ENCODE measurements at regions of chr3 and their contacts with region 1.

Region 1: GRCh38 chr3:102106416-102107097 is 257.2 kb downstream of the NFKBIZ start:
- DNase-seq: no peak
- H3K4me3 ChIP-seq: no peak overlapping the region
- H3K27ac ChIP-seq: no peak overlapping the region
- H3K4me1 ChIP-seq: no peaks in the 10 kb centered on the region
- H3K27me3 ChIP-seq: no peaks in the 10 kb centered on the region
- CTCF ChIP-seq: no peak
- POLR2A ChIP-seq: no peak

Region 2: GRCh38 chr3:100548053-100548452 is 1558.5 kb before region 1 on chr3:
- intact Hi-C with region 1: loop called (anchors 10 kb)
- DNase-seq: no peak
- H3K4me3 ChIP-seq: no peak overlapping the region
- H3K27ac ChIP-seq: no peak overlapping the region
- H3K4me1 ChIP-seq: no peaks in the 10 kb centered on the region
- H3K27me3 ChIP-seq: no peaks in the 10 kb centered on the region
- CTCF ChIP-seq: no peak
- POLR2A ChIP-seq: no peak

Region 3: DNA sequence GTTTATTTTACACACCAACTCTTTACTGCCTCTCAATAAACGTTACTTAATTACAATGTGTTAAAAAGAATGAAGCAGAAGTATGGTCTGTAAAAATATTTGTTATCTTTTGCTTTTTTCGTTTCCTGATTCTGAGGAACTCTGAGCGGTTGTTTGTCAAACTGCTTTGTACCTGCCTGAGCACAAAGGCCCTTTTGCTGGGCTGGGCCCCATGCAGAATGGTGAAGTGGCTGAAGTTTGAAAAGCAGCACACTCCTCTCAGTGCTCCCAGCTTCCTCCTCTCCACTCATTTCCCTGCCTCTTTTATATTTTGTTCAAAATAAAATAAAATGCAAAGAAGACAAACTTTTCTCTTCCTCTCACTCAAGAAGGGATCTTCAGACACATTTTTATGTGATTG is 27.7 kb before region 1 on chr3:
- intact Hi-C with region 1: no loop called
- DNase-seq: no peak
- H3K4me3 ChIP-seq: no peak overlapping the region
- H3K27ac ChIP-seq: peak overlapping the region; percentile 39 to 73
- H3K4me1 ChIP-seq: no peaks in the 10 kb centered on the region
- H3K27me3 ChIP-seq: no peaks in the 10 kb centered on the region
- CTCF ChIP-seq: no peak
- POLR2A ChIP-seq: no peak

Measured in breast epithelium (tissue), 4 donors.